ENCODE measurements at regions of chr11 and their contacts with region 1.

Region 1: GRCh38 chr11:45771566-45772448 is 33.1 kb upstream of the SLC35C1 start:
- DNase-seq: peak; percentile 91
- ATAC-seq: peak; percentile 98

Region 2: DNA sequence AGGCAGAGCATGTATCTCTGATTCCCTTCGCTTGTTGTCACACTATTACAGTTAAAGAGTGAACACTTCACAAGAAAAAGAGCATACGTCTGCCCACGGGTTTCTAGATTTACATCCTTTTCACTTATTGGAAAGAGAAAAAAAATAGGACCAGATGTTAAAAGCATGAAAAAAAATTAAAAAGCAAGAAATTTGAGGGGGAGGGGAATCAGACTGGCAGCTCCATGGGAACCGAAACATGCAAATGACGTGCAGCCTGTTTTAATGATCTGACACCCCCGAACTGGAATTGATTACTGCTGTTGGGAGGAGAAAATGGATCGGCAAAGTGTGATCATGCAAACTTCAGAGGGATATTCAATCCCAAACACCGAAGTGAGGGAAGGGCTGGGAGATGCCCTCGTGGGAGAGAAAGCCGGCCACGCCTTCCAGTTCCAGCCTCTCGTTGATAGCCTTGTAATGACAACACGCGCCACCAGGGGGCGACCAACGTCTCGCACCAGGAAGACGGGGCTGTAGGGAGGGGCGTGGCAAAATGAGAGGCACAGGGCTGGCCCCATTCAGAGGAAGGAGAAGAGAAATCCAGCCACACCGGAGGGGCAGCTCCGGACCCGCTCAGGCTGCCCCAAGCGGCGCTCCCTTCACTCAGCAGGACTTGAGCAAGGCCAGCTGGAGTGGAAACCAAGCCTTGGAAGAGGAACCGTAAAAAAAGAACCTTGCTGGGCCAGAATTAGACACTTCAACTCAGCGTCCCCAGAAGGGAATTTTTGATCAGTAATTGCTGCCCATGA is 431.9 kb before region 1 on chr11:
- intact Hi-C with region 1: loop called (anchors 5 kb)
- DNase-seq: peak; percentile 98
- ATAC-seq: peak; percentile 96

Region 3: GRCh38 chr11:45371251-45372115 is 400.3 kb before region 1 on chr11:
- intact Hi-C with region 1: loop called (anchors 2 kb)
- DNase-seq: peak; percentile 66
- ATAC-seq: peak; percentile 89

Region 4: GRCh38 chr11:45665206-45665932 is 106.4 kb before region 1 on chr11 and contains the start of gene CHST1:
- intact Hi-C with region 1: loop called (anchors 5 kb)
- DNase-seq: peak; percentile 76
- ATAC-seq: peak; percentile 93
- total RNA-seq, gene CHST1: 3.1 TPM